Naive thymus-derived CD8-positive, alpha-beta T cell (primary cell): ENCODE measurements at regions of chr5 and their contacts with region 1.

Region 1: DNA sequence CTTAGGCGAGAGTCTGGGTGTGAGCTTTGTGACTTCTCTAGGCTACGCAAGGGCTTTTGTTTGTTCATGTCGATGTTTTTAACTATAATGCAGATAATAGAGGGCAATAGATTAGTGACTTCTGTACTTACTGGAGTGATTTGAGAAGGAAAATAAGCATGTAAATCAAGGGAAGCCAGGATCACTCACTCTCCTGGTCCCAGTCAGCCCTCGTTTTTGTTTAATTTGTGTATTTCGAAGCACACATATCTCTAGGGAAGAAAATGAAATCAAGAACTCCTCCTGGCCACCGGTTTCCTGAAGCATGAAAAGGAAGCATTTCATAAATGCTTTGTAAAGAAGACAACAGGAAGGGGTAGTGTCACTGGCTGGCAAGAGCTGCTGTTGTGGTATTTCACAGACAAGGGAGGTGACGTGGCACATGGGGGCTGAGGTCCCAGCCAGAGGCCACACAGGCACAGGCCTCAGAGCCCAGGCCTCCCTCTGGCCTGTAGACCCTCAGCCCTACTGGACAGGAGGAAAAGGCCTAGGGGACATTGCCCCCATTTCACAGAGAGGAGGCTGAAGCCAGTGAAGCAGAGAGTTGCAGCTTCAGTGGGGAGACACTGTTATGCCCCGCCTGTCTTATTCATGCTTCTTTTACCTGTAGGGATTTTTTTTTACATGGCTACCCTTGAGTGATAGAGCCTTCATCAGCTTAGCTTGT is 34.1 kb downstream of the IRF1 start:
- DNase-seq: peak in 8 of 10 donors; percentile 61 to 82 (median 74)
- ATAC-seq: peak; percentile 71 to 79
- H3K4me3 Mint-ChIP-seq: peak overlapping the region; percentile 59 to 85 (median 75)
- H3K27ac Mint-ChIP-seq: peak overlapping the region; percentile 95 to 100 (median 98)
- H3K4me1 Mint-ChIP-seq: peaks cover 53 to 99% (median 92%) of the 10 kb centered on the region in 4 donors
- H3K27me3 Mint-ChIP-seq: no peaks in the 10 kb centered on the region

Region 2: DNA sequence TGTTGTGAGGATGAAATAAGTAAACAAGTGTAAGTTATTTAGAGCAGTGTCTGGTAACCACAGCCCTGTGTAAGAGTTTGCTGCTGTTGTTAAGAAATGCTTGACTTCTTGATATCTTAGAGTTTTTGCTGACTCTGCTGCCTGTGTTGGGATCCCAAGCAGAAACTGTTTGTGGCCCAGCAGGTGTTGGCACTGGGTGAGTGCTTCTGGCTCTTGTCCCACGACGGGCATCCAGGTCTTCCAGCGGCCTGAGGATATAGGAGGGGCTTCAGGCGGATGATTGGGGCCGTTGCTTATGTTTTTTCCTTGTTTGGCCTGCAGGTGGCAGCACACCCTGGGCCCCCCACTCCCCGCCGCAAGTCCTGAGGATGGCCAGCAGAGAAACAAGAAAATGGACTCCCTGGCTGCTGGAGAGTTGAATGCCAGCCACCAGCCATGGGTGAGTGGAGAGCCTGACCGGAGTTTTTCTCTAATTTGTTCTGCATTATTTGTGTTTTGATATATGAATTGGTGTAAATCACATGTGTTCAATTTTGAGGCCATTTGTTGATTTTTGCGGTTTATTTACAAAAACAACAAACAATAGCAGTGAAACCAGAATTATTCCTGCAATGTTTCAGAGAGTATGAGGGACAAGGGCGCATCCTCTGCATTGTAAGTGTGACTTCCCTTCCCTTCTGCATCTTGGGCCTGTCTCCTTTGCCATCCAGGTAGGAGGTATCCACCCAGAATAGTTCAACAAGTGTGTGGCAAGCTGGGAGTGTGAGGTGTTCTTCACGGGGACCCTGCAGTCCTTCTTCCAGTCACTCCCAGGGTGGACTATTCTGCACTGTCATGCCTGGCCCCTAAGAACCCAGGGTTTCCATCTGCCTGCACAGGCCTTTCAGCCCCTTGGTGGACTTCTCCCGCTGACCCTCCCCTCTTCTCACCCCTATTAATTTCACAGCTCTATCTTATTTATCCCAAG is 36.7 kb before region 1 on chr5:
- POLR2A ChIA-PET with region 1: interaction called, 149 read pairs
- DNase-seq: peak; percentile 27 to 78 (median 60)
- ATAC-seq: peak; percentile 65 to 69
- H3K4me3 Mint-ChIP-seq: peak overlapping the region; percentile 69 to 87 (median 78)
- H3K27ac Mint-ChIP-seq: peak overlapping the region; percentile 85 to 98 (median 94)
- H3K4me1 Mint-ChIP-seq: peaks cover 46 to 100% (median 91%) of the 10 kb centered on the region in 4 donors
- H3K27me3 Mint-ChIP-seq: no peaks in the 10 kb centered on the region

Region 3: GRCh38 chr5:132426525-132427138 is 29.8 kb before region 1 on chr5:
- POLR2A ChIA-PET with region 1: interaction called, 149 read pairs
- DNase-seq: peak in 5 of 10 donors; percentile 31 to 59 (median 36)
- ATAC-seq: peak; percentile 31 to 40
- H3K4me3 Mint-ChIP-seq: peak overlapping the region; percentile 62 to 90 (median 84)
- H3K27ac Mint-ChIP-seq: peak overlapping the region; percentile 95 to 100 (median 98)
- H3K4me1 Mint-ChIP-seq: peaks cover 51 to 100% (median 98%) of the 10 kb centered on the region in 4 donors
- H3K27me3 Mint-ChIP-seq: no peaks in the 10 kb centered on the region

Region 4: DNA sequence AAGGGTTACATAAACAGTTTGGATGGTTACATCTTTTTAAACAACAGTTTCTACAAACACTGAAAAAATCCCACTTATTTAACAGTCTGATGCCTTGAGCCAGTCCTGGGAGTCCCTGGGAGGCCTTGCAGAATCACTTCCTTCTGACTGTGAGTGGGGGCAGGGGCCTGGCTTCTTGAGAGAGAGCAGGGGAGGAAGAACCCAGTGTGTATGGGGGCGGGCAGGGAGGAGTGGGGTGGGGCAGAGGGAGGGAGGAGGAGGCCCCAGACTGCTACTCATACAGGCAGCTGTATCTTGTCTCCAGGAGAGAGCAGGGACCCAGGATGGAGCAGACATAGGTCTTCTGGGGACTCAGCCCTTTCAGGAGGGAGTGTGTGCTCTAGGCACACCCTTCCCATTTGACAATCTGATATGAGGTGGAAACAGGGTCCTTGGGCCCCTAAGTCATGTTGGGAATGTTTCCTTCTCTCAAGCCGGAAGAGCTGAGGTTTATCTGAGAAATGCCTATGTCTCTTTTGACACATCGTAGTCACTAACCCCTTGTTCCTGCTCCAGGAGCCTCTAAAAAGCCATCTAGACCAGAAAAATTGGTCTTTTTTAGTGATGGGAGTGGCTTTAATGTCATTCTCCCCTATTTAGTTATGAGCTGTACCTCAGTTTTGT is 18.7 kb before region 1 on chr5:
- POLR2A ChIA-PET with region 1: interaction called, 17 read pairs
- DNase-seq: peak; percentile 29 to 82 (median 52)
- ATAC-seq: peak; percentile 90 to 93
- H3K4me3 Mint-ChIP-seq: peak overlapping the region; percentile 38 to 77 (median 68)
- H3K27ac Mint-ChIP-seq: peak overlapping the region; percentile 84 to 94 (median 90)
- H3K4me1 Mint-ChIP-seq: peaks cover 47 to 95% (median 87%) of the 10 kb centered on the region in 4 donors
- H3K27me3 Mint-ChIP-seq: no peaks in the 10 kb centered on the region

Region 5: GRCh38 chr5:132466433-132467286 is 10.2 kb after region 1 on chr5:
- POLR2A ChIA-PET with region 1: interaction called, 357 read pairs
- DNase-seq: peak in 8 of 10 donors; percentile 40 to 79 (median 73)
- ATAC-seq: peak; percentile 78 to 79
- H3K4me3 Mint-ChIP-seq: peak overlapping the region; percentile 70 to 83 (median 76)
- H3K27ac Mint-ChIP-seq: peak overlapping the region; percentile 90 to 97 (median 95)
- H3K4me1 Mint-ChIP-seq: peaks cover 48 to 100% (median 96%) of the 10 kb centered on the region in 4 donors
- H3K27me3 Mint-ChIP-seq: no peaks in the 10 kb centered on the region